ENCODE measurements at regions of chr15 and their contacts with region 1.

Region 1: DNA sequence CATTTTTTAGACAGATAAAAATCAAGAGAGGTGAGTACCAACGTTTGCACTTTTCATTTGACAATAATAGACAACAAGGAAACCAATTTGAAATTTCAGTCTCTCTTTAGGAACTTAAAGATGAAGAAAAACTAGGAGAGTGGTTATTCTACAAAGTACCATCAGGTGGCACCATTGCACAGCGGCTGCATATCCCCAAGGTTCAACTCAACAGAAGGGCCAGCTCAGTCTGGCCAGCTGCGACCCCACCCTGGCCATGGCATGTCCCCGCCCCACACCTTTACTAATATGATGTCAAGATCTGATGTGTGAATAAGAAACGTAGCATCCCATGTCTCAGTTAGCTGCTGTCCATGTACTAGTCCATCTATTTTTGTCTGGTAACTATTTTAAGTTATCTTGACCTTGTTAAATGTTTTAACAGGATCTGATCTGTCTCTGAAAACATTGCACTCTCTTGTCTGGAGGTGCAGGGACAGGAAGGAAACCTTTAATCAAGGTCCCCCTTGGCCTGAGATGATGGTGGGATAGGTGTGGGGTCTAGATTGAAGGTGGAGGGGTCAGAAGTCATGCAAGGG is 35.5 kb upstream of the CGNL1 start:
- DNase-seq: peak; percentile 64
- CTCF ChIP-seq: peak; percentile 76

Region 2: GRCh38 chr15:57537072-57537471 is 196.3 kb after region 1 on chr15:
- in situ Hi-C with region 1: loop called (anchors 10 kb)
- DNase-seq: no peak
- CTCF ChIP-seq: no peak